ENCODE measurements at regions of chr16 and their contacts with region 1.

Region 1: DNA sequence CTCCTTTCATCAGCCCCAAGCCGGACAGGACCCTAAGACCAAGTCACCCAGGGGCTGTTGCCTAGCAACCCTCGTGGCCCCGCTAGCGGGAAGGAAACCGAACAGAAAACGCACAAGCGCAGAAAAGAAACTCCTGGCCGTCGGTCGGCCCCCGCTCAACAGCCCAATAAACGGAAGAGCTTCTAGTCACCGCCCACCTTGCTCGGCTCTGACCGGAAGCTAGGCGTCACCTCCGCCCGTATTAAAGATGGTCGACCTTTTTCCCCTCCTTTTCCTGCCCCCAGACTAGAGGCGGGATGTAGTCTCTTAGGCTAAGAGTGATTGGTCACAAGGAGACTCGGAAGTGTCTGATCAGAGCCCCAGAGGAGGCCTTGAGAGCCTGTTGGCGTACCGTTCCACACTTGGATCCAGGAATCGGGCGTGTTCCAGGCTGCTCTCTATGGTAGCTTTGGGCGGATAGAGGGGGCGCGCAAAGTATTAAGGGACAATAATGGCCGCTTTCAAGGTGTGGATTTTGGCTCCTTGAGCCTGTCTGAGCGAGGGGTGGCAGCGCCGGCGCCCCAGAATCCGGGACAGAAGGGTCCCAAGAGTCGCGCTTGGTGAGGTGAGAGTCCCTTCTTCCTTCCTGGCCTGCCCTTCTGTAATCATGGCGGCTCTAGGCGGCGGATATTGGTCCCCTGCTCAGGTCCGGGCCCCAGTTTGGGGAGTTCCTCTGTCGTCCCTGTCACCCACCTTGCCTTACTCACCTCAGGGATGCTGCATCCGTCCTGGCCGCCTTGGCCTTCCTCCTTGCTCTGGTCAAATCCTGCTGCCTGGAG is at the starts of genes DHX38 and TXNL4B:
- DNase-seq: peak; percentile 98
- H3K4me3 ChIP-seq: peak within 1 kb of the TSS; percentile 96
- H3K27ac ChIP-seq: peak within 1 kb of the TSS; percentile 64
- H3K4me1 ChIP-seq: peaks cover 29% of the 10 kb centered on the region
- CTCF ChIP-seq: no peak
- total RNA-seq, gene DHX38: 56.6 and 71.9 TPM in 2 replicates
- total RNA-seq, gene TXNL4B: 7.9 and 9.5 TPM in 2 replicates

Region 2: DNA sequence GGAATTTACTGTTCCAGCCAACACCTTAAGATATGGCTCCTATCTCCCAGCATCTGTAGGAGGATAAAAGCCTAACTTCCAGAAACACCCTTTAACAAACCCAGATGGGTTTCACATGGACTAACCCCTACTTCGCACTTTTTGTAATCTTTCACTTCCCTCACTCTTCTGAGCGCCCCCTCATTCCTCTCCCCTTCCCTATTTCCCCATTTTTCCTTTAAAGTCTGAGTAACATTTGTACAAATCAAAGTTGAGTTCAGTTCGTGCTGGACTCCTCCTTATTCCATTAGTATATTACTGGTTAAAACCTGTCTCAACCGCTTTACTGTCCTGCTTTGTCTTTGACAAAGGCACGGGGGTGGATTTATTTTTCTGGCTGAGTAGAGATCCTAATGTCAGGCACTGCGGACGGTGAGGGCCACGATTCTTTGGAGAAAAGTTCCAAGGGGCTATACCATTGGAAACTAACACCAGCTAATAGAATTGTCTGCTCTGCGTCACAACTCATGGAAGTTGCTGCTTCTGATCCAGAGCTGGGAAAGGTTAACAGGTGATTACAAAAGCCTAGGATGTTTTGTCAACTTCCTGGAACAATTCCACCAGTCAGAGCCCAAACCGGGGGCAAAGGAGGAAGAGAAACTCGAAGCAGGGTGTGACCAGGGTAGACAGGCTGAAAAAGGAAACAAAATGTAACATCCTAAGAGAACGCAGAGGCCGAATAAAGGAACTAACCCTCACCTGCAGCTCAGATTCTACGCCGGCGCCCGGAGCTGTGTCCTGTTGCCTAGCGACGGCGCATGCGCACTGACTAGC is 529.3 kb before region 1 on chr16:
- CTCF ChIA-PET with region 1: no interaction called
- POLR2A ChIA-PET with region 1: no interaction called
- intact Hi-C with region 1: loop called (anchors 10 kb)
- DNase-seq: no peak
- H3K4me3 ChIP-seq: peak overlapping the region; percentile 67
- H3K27ac ChIP-seq: peak overlapping the region; percentile 97
- H3K4me1 ChIP-seq: peaks cover 29% of the 10 kb centered on the region
- CTCF ChIP-seq: no peak

Region 3: GRCh38 chr16:71723537-71724319 is 369.9 kb before region 1 on chr16:
- CTCF ChIA-PET with region 1: no interaction called
- POLR2A ChIA-PET with region 1: no interaction called
- intact Hi-C with region 1: loop called (anchors 10 kb)
- DNase-seq: peak; percentile 88
- H3K4me3 ChIP-seq: peak overlapping the region; percentile 94
- H3K27ac ChIP-seq: peak overlapping the region; percentile 66
- H3K4me1 ChIP-seq: peaks cover 52% of the 10 kb centered on the region
- CTCF ChIP-seq: peak; percentile 28; the same call in 1 of the 2 replicates

Region 4: GRCh38 chr16:71845639-71846430 is 247.8 kb before region 1 on chr16 and contains the start of gene ATXN1L:
- CTCF ChIA-PET with region 1: no interaction called
- POLR2A ChIA-PET with region 1: no interaction called
- intact Hi-C with region 1: loop called (anchors 5 kb)
- DNase-seq: peak; percentile 94
- H3K4me3 ChIP-seq: peak within 1 kb of the TSS; percentile 89
- H3K27ac ChIP-seq: peak within 1 kb of the TSS; percentile 18
- H3K4me1 ChIP-seq: peaks cover 32% of the 10 kb centered on the region
- CTCF ChIP-seq: no peak
- total RNA-seq, gene ATXN1L: 12.5 and 12.8 TPM in 2 replicates

Region 5: DNA sequence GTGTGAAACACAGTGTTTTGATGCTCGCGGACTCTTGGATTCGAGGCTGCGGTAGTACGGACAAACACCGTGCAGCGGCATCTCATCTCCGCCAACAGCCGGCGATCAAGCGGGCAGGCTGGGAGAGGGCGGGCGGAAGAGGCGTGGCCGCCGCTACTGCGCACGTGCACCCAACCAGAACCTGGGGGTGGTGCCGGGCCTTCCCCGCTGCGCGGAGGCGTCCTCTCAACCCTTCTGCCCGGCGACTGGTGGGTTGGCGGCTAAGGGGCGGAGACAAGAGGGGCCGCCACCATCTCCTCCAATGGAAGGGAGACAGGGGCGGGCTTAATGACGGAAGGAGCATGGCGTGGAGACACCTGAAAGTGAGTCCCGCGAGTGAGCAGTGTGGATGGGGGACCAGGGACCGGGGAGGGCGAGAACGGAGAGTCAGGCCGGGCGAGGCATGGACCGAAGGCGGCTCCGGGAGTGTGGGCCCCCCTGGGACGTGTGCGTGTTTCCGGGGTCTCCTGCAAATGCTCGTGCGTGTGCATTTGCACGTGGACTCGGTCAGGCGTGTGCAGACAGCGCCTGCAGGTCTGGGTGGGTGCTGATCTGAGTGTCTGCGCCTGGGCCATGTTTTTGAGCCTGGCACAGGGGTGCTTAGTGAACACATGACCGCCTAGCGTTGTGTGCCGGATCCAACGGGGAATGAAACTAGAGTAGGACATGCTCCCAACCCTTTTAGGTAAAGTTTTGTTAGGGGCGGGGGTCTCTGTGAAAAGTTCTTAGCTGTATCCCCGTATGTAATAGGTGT is 85.0 kb before region 1 on chr16 and contains the start of gene DHODH:
- CTCF ChIA-PET with region 1: no interaction called
- POLR2A ChIA-PET with region 1: no interaction called
- intact Hi-C with region 1: loop called (anchors 1 kb)
- DNase-seq: peak; percentile 98
- H3K4me3 ChIP-seq: peak within 1 kb of the TSS; percentile 79
- H3K27ac ChIP-seq: peak within 1 kb of the TSS; percentile 52
- H3K4me1 ChIP-seq: peaks cover 6% of the 10 kb centered on the region
- CTCF ChIP-seq: no peak
- total RNA-seq, gene DHODH: 12.3 and 15.7 TPM in 2 replicates

Measured in OCI-LY7 (cell line).